SK-N-SH (cell line): ENCODE measurements at regions of chr3 and their contacts with region 1.

Region 1: DNA sequence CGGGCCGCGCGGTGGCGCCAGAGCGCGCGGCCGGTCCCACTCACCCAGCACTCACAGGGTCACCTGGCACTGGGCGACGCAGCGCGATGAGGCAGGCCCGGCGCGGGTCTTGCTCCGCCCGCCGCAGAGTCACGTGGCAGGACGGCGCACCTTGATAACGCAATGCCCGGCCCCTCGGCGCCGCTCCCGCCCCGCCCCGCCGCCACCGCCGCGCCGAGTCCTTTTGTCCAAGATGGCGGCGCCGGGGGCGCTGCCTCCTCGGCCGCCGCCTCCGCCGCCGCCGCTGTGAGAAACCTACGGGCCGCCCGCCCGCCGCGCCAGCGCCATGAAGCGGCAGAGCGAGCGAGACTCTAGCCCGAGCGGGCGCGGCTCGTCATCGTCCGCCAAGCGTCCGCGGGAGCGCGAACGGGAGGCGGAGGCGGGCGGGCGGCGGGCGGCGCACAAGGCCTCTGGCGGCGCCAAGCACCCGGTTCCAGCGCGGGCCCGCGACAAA is at the start of gene RBM15B:
- DNase-seq: peak; percentile 98
- H3K4me3 ChIP-seq: peak within 1 kb of the TSS; percentile 76 to 89
- H3K27ac ChIP-seq: peak within 1 kb of the TSS; percentile 53 to 81
- H3K4me1 ChIP-seq: peaks cover 27 to 76% of the 10 kb centered on the region in 2 experiments
- H3K27me3 ChIP-seq: no peaks in the 10 kb centered on the region
- CTCF ChIP-seq: no peak; the same call in 1 of the 2 replicates
- EP300 ChIP-seq: peak in 1 of 2 experiments; percentile 8; a peak in 1 of 4 replicates
- RAD21 ChIP-seq: peak; percentile 54
- polyA plus RNA-seq, gene RBM15B: 11.3 and 17.0 TPM in 2 replicates

Region 2: DNA sequence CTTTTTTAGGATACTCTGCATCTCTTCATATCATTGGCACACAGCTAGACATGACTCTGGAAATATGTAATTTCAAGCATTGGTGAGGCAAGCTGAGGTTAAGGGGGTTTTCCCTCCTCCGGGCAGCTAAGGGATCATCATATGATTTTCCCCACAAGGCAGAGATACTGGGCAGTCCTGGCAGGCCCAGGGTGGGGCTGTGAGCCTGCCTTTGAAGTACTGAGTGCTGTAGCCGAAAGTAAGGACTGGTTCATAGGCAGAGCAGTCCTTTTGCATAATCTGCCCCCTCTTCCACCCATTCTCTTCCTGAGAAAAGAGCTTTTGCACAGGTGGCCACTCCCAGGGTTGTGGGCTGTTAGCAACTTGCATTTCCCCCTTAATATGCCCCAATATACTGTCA is 174.8 kb before region 1 on chr3:
- CTCF ChIA-PET with region 1: no interaction called
- POLR2A ChIA-PET with region 1: no interaction called
- DNase-seq: no peak
- H3K4me3 ChIP-seq: no peak overlapping the region
- H3K27ac ChIP-seq: no peak overlapping the region
- H3K4me1 ChIP-seq: no peaks in the 10 kb centered on the region
- H3K27me3 ChIP-seq: no peaks in the 10 kb centered on the region
- CTCF ChIP-seq: no peak
- EP300 ChIP-seq: no peak
- RAD21 ChIP-seq: no peak

Region 3: DNA sequence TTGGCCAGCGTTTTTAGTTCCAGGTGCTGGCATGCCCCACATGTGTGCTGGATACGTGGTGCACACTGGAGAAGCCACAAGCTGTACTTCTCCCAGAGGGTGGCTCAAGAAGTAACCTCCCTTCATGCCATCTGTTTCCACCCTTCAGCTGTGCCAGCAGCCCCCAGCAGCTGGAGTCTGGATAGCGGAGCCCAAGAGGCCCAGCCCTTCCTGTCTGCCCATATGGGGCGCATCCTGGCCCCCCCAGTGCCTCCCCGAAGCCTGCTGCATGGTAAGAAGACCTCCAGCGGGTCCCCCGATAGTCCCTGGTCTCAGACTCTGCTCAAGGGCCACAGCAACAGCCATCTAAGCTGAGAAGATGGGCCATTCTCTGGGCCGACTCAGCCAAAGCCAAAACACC is 11.8 kb before region 1 on chr3:
- CTCF ChIA-PET with region 1: interaction called, 37 read pairs
- POLR2A ChIA-PET with region 1: no interaction called
- DNase-seq: no peak
- H3K4me3 ChIP-seq: no peak overlapping the region
- H3K27ac ChIP-seq: no peak overlapping the region
- H3K4me1 ChIP-seq: peaks cover 6% of the 10 kb centered on the region in 2 experiments; a peak in 3 of 4 replicates
- H3K27me3 ChIP-seq: no peaks in the 10 kb centered on the region; the same call in 1 of the 2 replicates
- CTCF ChIP-seq: no peak
- EP300 ChIP-seq: no peak
- RAD21 ChIP-seq: no peak

Region 4: DNA sequence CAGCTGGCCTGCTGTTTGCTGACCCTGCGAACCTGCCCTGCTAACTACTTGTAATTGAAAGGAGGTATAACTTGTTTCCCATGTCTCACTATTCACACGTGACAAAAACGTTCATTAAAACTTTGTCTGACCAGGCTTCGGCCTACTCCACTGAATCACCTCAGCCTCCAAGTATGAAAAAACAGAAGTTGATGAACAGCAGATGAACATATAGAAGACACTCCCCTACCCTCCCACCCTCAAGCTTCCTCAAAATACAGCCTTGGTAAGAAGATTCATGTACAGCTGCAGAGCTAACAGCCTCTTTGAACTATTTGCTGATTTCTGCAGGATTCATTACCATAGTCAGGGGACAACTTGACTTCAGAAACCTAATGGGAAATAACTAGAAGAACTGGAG is 10.6 kb after region 1 on chr3:
- CTCF ChIA-PET with region 1: interaction called, 34 read pairs
- POLR2A ChIA-PET with region 1: interaction called, 3 read pairs
- DNase-seq: no peak
- H3K4me3 ChIP-seq: no peak overlapping the region
- H3K27ac ChIP-seq: no peak overlapping the region
- H3K4me1 ChIP-seq: no peaks in the 10 kb centered on the region; a peak in 1 of 4 replicates
- H3K27me3 ChIP-seq: no peaks in the 10 kb centered on the region
- CTCF ChIP-seq: no peak
- EP300 ChIP-seq: no peak
- RAD21 ChIP-seq: no peak

Region 5: GRCh38 chr3:51408813-51409212 is 17.7 kb after region 1 on chr3:
- CTCF ChIA-PET with region 1: interaction called, 18 read pairs
- POLR2A ChIA-PET with region 1: no interaction called
- DNase-seq: no peak
- H3K4me3 ChIP-seq: no peak overlapping the region
- H3K27ac ChIP-seq: no peak overlapping the region
- H3K4me1 ChIP-seq: no peaks in the 10 kb centered on the region
- H3K27me3 ChIP-seq: no peaks in the 10 kb centered on the region
- CTCF ChIP-seq: no peak
- EP300 ChIP-seq: no peak
- RAD21 ChIP-seq: no peak

Region 6: DNA sequence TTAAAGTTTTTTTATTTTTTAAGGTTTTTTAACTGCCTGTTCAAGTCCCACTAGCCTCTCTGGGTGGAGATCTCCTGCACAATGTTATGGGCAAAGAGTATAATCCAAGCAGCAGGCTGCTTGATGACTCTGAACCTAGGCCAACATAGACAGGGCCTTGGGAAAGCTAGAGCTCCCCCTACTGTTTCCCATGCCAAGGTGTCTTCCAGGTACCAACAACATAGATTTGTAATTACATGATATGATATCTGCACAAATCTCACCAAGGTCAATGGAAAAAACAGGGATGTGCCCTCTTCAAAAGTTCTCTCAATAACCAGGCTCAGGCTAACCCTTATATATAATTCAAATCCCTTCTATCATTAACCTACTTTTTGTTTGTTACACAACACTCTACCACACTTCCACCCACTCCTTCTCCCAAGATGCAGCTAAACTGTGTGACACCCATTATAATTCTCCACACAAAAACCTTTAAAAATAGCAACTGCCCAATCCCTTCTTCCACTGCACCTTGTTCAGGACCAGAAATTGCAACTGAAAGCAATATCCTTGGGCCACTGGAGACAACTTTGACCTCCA is 43.7 kb after region 1 on chr3:
- CTCF ChIA-PET with region 1: interaction called, 17 read pairs
- POLR2A ChIA-PET with region 1: interaction called, 3 read pairs
- DNase-seq: peak; percentile 52
- H3K4me3 ChIP-seq: no peak overlapping the region
- H3K27ac ChIP-seq: no peak overlapping the region
- H3K4me1 ChIP-seq: no peaks in the 10 kb centered on the region
- H3K27me3 ChIP-seq: no peaks in the 10 kb centered on the region
- CTCF ChIP-seq: peak; percentile 77
- EP300 ChIP-seq: no peak
- RAD21 ChIP-seq: peak; percentile 47

Region 7: DNA sequence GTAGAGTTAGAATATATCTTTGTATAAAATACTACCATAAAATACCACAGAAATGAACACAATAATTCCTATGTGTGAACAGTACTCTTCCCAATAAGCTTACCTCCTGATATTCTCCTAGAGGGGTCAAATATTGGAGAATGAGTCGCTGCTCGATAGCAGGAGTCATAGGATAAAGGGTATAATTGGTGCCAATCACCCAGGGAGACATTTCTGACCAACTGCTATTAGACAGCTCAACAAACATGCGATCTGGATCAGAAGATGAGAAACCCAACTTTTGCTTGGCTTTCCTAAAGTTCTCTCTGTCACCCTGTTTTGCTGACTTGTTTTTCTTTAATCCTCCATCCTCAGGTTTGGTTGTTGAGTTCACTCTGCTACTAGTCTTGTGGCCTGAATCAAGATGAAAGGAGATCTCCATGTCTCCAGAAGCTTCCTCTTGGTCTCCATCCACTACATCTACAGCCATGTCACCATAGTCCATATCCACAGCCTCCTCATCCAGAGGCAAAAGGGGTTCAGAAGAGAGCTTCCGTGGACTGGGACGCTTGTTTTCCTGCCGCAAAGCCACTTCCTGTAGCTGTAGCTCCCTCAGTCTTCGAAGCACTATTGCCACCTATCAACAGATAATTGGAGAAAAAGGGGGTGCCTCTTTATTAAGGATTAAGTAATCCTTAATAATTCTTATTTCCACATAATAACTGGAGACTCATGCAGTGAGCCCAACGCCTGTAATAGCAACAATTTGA is 50.3 kb after region 1 on chr3:
- CTCF ChIA-PET with region 1: interaction called, 19 read pairs
- POLR2A ChIA-PET with region 1: interaction called, 3 read pairs
- DNase-seq: no peak
- H3K4me3 ChIP-seq: no peak overlapping the region
- H3K27ac ChIP-seq: no peak overlapping the region
- H3K4me1 ChIP-seq: no peaks in the 10 kb centered on the region
- H3K27me3 ChIP-seq: no peaks in the 10 kb centered on the region
- CTCF ChIP-seq: no peak
- EP300 ChIP-seq: no peak
- RAD21 ChIP-seq: no peak

Region 8: DNA sequence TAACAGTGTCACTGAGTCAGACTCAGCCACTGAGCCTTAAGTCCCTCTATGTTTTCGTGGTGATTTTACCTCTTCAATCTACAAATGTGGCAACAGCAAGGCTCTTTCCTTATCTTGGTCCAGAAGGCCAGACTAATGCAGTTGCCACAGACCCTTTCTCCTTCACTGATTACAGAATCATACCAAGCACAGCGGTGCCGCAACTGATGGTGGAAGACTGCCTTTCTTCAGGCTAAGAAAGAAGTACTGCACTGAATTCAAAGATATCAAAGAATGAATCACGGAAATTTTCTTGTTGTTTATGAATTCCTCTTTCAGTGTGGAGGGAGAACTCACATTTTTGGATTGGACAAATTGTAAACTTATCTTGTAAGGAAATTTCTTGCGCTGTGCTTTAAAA is 1937.6 kb after region 1 on chr3:
- CTCF ChIA-PET with region 1: no interaction called
- POLR2A ChIA-PET with region 1: no interaction called
- DNase-seq: peak; percentile 19
- H3K4me3 ChIP-seq: no peak overlapping the region
- H3K27ac ChIP-seq: no peak overlapping the region; a peak in 1 of 4 replicates
- H3K4me1 ChIP-seq: peaks cover 6 to 10% of the 10 kb centered on the region in 2 experiments; a peak in 2 of 4 replicates
- H3K27me3 ChIP-seq: no peaks in the 10 kb centered on the region
- CTCF ChIP-seq: no peak
- EP300 ChIP-seq: no peak
- RAD21 ChIP-seq: no peak